Activated CD4-positive, alpha-beta T cell treated with anti-CD3 and anti-CD28 coated beads for 36 hours (primary cell): ENCODE measurements at regions of chr1 and their contacts with region 1.

Region 1: DNA sequence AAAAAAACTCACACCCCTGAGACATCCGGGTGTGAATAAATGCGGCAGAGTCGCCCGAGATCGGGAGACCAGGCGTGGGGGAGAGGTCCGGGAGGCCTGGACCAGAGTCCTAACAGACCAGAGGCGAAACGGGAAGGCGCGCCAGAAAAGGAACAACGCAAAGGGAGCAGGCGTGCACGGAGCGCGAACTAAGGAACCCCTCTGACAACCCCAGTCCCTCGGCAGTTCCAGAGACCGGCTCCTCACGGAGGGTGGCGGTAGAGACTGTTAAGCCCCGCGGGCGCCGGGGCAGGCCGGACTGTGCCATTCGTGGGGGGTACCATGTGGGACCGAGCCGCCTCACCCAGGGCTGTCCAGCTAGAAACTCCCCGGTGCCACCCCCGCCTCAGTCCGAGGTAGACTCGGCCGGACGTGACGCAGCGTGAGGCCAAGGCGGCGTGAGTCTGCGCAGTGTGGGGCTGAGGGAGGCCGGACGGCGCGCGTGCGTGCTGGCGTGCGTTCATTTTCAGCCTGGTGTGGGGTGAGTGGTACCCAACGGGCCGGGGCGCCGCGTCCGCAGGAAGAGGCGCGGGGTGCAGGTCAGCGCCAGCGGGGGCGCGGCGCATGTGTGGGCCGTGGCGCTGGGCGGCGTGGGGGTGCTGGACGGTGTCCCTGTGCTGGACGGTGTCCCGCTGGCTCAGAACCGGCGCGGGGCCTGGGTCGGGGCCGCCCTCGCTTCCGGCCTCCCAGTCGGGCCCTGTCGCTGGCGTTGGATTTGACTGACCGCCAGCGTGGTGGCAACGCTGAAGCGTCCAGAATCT is at the start of gene PARK7:
- DNase-seq: peak; percentile 100
- ATAC-seq: peak; percentile 98
- H3K4me3 Mint-ChIP-seq: peak within 1 kb of the TSS; percentile 100
- H3K27ac Mint-ChIP-seq: peak within 1 kb of the TSS; percentile 100
- H3K4me1 Mint-ChIP-seq: peaks cover 49% of the 10 kb centered on the region
- H3K27me3 Mint-ChIP-seq: no peaks in the 10 kb centered on the region
- total RNA-seq, gene PARK7: 294 to 390 TPM

Region 2: GRCh38 chr1:7770997-7771822 is 190.2 kb before region 1 on chr1 and contains the start of gene VAMP3:
- CTCF ChIA-PET with region 1: no interaction called
- POLR2A ChIA-PET with region 1: no interaction called
- intact Hi-C with region 1: loop called in 1 of 2 experiments (anchors 1 kb)
- DNase-seq: peak; percentile 94
- ATAC-seq: peak; percentile 90
- H3K4me3 Mint-ChIP-seq: peak within 1 kb of the TSS; percentile 80
- H3K27ac Mint-ChIP-seq: peak within 1 kb of the TSS; percentile 72
- H3K4me1 Mint-ChIP-seq: peaks cover 21% of the 10 kb centered on the region
- H3K27me3 Mint-ChIP-seq: peaks cover 6% of the 10 kb centered on the region
- total RNA-seq, gene VAMP3: 16.8 to 17.4 TPM

Region 3: DNA sequence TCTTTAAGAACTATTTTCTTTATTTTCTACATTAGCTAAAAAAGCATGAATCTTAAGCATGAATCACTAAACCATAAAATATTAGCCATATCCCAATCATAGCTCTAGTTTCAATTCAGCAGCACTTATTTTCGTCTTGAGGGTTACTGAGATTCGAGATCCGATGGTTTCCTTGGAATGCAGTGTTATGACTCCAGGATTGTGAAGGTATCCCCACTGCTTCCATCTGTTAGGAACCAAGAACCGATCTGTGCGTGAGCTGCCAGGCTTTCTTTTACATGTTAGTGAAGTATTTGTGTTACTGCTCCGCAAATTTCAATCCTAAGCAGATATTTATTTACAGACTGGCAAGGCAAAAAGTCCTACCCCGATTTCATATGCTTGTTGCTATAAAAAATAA is 39.6 kb before region 1 on chr1:
- CTCF ChIA-PET with region 1: no interaction called
- POLR2A ChIA-PET with region 1: no interaction called
- intact Hi-C with region 1: loop called in 1 of 2 experiments (anchors 2 kb)
- DNase-seq: no peak
- ATAC-seq: no peak
- H3K4me3 Mint-ChIP-seq: no peak overlapping the region
- H3K27ac Mint-ChIP-seq: no peak overlapping the region
- H3K4me1 Mint-ChIP-seq: peaks cover 25% of the 10 kb centered on the region
- H3K27me3 Mint-ChIP-seq: no peaks in the 10 kb centered on the region

Region 4: DNA sequence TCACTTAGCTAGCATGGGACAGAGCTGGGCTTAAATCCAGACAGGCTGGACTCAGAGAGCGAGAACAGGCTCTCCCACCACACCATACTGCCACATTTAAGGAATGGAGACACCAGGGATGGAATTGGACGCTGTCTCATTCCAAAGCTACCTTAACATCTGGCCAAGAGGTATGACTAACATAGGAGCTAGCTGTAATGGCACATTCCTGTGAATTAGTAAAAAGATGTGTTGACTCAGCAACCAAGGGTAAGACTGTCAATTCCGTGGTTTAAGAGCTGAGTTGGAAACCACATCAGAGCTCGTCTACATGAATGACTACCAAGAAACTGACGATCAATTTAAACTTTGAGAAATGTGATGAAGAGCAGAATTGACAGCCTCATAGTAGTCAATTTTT is 12.5 kb before region 1 on chr1:
- CTCF ChIA-PET with region 1: interaction called, 4 read pairs
- POLR2A ChIA-PET with region 1: interaction called, 18 read pairs
- intact Hi-C with region 1: loop called in 1 of 2 experiments (anchors 1 kb)
- DNase-seq: peak; percentile 50
- ATAC-seq: peak; percentile 92
- H3K4me3 Mint-ChIP-seq: peak overlapping the region; percentile 42
- H3K27ac Mint-ChIP-seq: peak overlapping the region; percentile 80
- H3K4me1 Mint-ChIP-seq: peaks cover 30% of the 10 kb centered on the region
- H3K27me3 Mint-ChIP-seq: no peaks in the 10 kb centered on the region

Region 5: GRCh38 chr1:8097077-8097799 is 135.8 kb after region 1 on chr1:
- CTCF ChIA-PET with region 1: no interaction called
- POLR2A ChIA-PET with region 1: no interaction called
- intact Hi-C with region 1: loop called in 1 of 2 experiments (anchors 2 kb)
- DNase-seq: peak; percentile 47
- ATAC-seq: peak; percentile 91
- H3K4me3 Mint-ChIP-seq: peak overlapping the region; percentile 59
- H3K27ac Mint-ChIP-seq: peak overlapping the region; percentile 96
- H3K4me1 Mint-ChIP-seq: peaks cover 40% of the 10 kb centered on the region
- H3K27me3 Mint-ChIP-seq: peaks cover 11% of the 10 kb centered on the region

Region 6: DNA sequence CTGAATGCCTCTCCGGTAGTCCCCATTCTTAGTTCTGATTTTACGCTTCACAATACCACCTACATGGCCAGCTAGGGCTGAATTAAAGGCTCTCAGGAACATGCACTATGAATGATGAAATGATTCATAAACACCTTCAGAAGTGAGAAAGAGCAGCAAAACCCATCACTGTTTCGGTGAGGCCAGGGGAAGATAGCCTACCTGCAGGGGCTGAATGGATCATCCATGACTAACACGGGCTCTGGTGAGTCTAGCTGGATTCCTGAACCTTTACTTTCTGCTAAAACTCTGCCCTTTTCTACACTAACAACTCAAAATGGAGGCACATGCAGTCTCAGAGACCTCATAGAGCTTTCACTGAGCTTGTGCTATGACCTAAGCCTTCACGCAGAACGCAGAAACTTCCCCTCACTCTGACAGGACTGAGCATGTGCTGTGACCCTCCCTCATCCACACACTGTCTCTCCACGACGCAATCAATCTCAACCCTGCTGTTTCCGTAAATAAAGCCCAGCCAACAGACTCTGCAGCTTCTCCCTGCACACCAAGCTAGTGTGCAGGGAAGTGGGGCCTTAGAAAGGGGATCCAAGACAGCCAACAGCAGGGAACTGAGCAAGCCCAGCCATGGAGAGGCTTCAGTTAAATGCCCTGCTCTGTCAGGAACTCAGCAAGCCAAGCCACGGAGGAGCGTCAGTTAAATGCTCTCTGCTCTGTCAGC is 564.3 kb after region 1 on chr1:
- CTCF ChIA-PET with region 1: no interaction called
- POLR2A ChIA-PET with region 1: no interaction called
- intact Hi-C with region 1: loop called in 1 of 2 experiments (anchors 5 kb)
- DNase-seq: peak; percentile 85
- ATAC-seq: peak; percentile 94
- H3K4me3 Mint-ChIP-seq: no peak overlapping the region
- H3K27ac Mint-ChIP-seq: no peak overlapping the region
- H3K4me1 Mint-ChIP-seq: peaks cover 24% of the 10 kb centered on the region
- H3K27me3 Mint-ChIP-seq: no peaks in the 10 kb centered on the region

Region 7: GRCh38 chr1:8878448-8879347 is 917.3 kb after region 1 on chr1 and contains the start of gene ENO1:
- CTCF ChIA-PET with region 1: no interaction called
- POLR2A ChIA-PET with region 1: no interaction called
- intact Hi-C with region 1: loop called in 1 of 2 experiments (anchors 2 kb)
- DNase-seq: peak; percentile 99
- ATAC-seq: peak; percentile 72
- H3K4me3 Mint-ChIP-seq: peak within 1 kb of the TSS; percentile 90
- H3K27ac Mint-ChIP-seq: peak within 1 kb of the TSS; percentile 99
- H3K4me1 Mint-ChIP-seq: peaks cover 35% of the 10 kb centered on the region
- H3K27me3 Mint-ChIP-seq: no peaks in the 10 kb centered on the region
- total RNA-seq, gene ENO1: 2,573 to 3,583 TPM